Sigmoid colon (tissue), 7 donors: ENCODE measurements at regions of chr1 and their contacts with region 1.

Region 1: DNA sequence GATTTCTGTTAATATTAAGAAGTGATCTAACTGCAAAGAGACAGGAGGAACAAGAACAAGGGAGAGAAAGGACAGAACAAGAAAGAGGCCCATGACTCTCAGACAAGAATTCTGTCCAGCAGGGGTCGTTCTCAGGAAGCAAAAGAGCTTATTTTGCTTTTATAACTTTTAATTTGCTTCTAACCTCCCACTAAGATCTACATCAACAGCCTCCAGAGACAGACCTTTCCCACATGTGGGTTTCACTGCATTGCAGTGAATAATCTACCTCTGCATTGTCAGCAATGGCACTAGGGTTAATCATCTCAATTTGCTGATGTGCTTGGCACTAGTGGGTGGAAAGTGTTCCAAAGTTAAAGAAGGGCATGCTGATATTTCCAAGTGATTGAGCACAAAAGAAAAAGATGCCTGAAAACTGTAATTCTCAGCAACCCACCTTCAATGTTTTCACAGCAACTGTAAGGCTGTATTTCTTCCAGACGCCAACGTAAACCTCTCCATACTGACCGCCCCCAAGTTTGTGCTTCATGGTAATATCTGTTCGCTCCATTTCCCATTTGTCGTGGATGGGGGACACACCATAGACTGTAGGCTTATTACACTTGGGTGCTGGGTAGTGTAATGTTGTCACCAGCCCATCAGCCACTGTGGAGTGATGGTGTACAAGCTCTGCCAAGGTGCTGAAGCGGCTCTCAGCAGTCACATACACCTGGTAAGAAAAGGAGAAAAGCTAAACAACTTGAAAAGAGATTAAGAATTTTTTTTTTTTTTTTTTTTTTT is 39.5 kb downstream of the TOR3A start:
- DNase-seq: no peak
- H3K4me3 ChIP-seq: no peak overlapping the region
- H3K27ac ChIP-seq: no peak overlapping the region
- H3K4me1 ChIP-seq: peaks cover 0 to under 1% (median 0%) of the 10 kb centered on the region in 4 donors
- H3K27me3 ChIP-seq: no peaks in the 10 kb centered on the region
- CTCF ChIP-seq: peak; percentile 11 to 50 (median 40)
- EP300 ChIP-seq: no peak
- POLR2A ChIP-seq: no peak

Region 2: DNA sequence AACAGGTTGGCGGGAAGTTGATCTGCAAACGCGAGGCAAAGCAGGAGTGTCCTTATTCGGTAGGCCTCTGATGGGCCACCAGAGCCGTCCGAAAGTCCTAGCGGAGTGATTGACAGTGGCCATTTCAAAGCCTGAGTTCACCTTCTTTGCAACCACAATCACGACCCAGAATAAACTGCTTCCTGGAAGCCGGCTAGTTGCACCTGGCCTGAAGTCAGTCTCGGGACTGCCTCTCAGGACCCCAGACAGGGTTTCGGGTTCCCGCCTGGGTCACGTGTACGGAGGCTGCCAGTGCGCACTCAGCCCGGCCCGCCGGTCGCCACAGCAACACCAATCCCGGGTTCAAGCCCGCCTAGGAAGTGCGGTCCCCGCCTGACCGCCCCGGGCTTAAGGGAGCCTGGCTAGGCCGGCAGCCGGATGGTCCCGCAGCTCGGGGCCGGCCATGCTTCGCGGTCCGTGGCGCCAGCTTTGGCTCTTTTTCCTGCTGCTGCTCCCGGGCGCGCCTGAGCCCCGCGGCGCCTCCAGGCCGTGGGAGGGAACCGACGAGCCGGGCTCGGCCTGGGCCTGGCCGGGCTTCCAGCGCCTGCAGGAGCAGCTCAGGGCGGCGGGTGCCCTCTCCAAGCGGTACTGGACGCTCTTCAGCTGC is 39.5 kb before region 1 on chr1 and contains the start of gene TOR3A:
- intact Hi-C with region 1: loop called (anchors 5 kb)
- DNase-seq: peak; percentile 97
- H3K4me3 ChIP-seq: peak within 1 kb of the TSS; percentile 64 to 94 (median 86)
- H3K27ac ChIP-seq: peak within 1 kb of the TSS; percentile 84 to 92 (median 91)
- H3K4me1 ChIP-seq: peaks cover 0 to 24% (median 20%) of the 10 kb centered on the region in 4 donors
- H3K27me3 ChIP-seq: no peaks in the 10 kb centered on the region
- CTCF ChIP-seq: no peak
- EP300 ChIP-seq: no peak
- POLR2A ChIP-seq: peak; percentile 53 to 74
- total RNA-seq, gene TOR3A: 38.8 to 53.5 (median 39.9) TPM

Region 3: GRCh38 chr1:179175011-179175841 is 53.9 kb after region 1 on chr1:
- intact Hi-C with region 1: loop called (anchors 5 kb)
- DNase-seq: no peak
- H3K4me3 ChIP-seq: no peak overlapping the region
- H3K27ac ChIP-seq: peak overlapping the region; percentile 42 to 68 (median 50)
- H3K4me1 ChIP-seq: peaks cover 0 to 55% (median 48%) of the 10 kb centered on the region in 4 donors
- H3K27me3 ChIP-seq: no peaks in the 10 kb centered on the region
- CTCF ChIP-seq: no peak
- EP300 ChIP-seq: no peak
- POLR2A ChIP-seq: no peak

Region 4: GRCh38 chr1:179190861-179191260 is 69.5 kb after region 1 on chr1:
- intact Hi-C with region 1: loop called (anchors 5 kb)
- DNase-seq: no peak
- H3K4me3 ChIP-seq: no peak overlapping the region
- H3K27ac ChIP-seq: peak overlapping the region in 3 of 4 donors; percentile 25 to 59 (median 39)
- H3K4me1 ChIP-seq: peaks cover 0 to 11% (median 5%) of the 10 kb centered on the region in 4 donors
- H3K27me3 ChIP-seq: no peaks in the 10 kb centered on the region
- CTCF ChIP-seq: no peak
- EP300 ChIP-seq: peak in 2 of 4 donors; percentile 8 to 10
- POLR2A ChIP-seq: no peak